ENCODE measurements at regions of chrX and their contacts with region 1.

Region 1: DNA sequence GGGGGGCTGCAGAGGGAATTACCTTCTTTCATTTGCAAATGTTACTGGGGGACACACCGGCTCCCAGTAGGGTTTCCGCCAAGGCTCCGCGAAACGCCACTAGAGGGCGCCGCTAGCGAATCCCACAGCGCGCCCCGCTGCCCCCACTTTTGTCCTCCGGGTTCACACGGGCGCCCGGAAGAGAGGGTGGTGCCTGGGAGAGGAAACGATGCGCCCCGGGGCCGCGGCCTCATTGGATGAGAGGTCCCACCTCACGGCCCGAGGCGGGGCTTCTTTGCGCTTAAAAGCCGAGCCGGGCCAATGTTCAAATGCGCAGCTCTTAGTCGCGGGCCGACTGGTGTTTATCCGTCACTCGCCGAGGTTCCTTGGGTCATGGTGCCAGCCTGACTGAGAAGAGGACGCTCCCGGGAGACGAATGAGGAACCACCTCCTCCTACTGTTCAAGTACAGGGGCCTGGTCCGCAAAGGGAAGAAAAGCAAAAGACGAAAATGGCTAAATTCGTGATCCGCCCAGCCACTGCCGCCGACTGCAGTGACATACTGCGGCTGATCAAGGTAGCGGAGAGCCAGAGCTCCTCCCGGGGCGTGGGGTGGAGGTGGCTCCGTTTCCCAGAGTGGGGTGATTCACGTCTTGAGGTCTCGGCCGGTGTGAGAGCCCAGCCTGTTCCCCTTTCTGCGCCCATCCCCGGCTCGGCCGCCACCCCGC is at the start of gene SAT1:
- DNase-seq: peak; percentile 95
- ATAC-seq: peak; percentile 88
- H3K4me3 ChIP-seq: peak within 1 kb of the TSS; percentile 71 to 92 (median 81)
- H3K4me3 Mint-ChIP-seq: peak within 1 kb of the TSS; percentile 94
- H3K27ac ChIP-seq: peak within 1 kb of the TSS; percentile 87 to 92
- H3K27ac Mint-ChIP-seq: peak within 1 kb of the TSS; percentile 98
- H3K4me1 ChIP-seq: peaks cover 17 to 37% of the 10 kb centered on the region in 2 donors
- H3K4me1 Mint-ChIP-seq: peaks cover 32% of the 10 kb centered on the region
- H3K27me3 ChIP-seq: no peaks in the 10 kb centered on the region
- H3K27me3 Mint-ChIP-seq: no peaks in the 10 kb centered on the region
- CTCF ChIP-seq: peak; percentile 72
- total RNA-seq, gene SAT1: 162 and 172 TPM in 2 replicates

Region 2: DNA sequence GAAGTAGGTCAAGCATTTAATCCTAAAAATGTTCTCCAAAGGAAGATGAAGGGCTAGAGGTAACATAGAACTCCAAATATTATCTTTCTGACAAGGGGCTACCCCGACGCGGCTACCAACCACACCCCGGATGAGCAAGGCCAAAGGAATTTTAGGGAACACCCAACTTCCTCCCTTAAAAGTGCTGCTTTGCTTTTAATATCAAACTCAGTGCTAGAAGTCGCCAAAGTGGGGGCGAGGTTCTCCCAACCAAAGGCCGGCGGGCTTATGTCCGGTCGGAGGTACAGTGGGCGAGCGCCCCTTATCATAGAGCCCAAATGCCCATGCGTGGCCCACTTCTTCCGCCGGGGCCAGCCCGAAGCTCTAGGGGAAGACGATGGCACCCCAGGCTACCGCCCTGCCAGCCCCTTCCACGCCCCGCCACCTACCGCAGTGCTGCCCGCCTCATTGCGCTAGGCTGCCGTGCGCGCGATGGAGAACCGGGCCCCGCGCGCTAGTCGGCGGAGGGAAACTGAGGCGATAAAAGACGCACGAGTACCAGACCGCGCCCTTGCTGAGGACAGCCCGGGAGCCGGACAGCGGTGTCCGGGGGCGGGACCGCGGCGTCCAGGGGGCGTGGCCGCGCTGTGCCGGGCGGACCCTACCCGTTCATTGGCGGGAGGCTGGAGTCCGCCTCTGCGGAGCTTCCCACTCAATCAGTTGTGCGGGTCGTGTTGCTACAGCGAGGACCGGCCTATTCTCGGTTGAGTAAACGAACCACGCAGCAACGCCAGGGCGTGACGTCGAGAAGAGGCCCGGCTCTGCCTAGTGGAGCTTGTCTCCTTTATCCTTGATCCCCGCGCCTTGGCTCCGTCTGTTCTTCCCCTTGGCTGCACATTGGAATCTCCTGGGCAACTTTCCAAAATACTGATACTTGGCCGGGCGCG is 40.1 kb before region 1 on chrX and contains the start of gene ACOT9:
- CTCF ChIA-PET with region 1: interaction called, 8 read pairs
- POLR2A ChIA-PET with region 1: interaction called, 4 read pairs
- intact Hi-C with region 1: loop called (anchors 2 kb)
- DNase-seq: peak; percentile 86
- ATAC-seq: peak; percentile 95
- H3K4me3 ChIP-seq: peak within 1 kb of the TSS; percentile 36 to 80 (median 75)
- H3K4me3 Mint-ChIP-seq: peak within 1 kb of the TSS; percentile 91
- H3K27ac ChIP-seq: peak within 1 kb of the TSS; percentile 86 to 87
- H3K27ac Mint-ChIP-seq: peak within 1 kb of the TSS; percentile 90
- H3K4me1 ChIP-seq: peaks cover 3 to 12% of the 10 kb centered on the region in 2 donors
- H3K4me1 Mint-ChIP-seq: peaks cover 31% of the 10 kb centered on the region
- H3K27me3 ChIP-seq: no peaks in the 10 kb centered on the region
- H3K27me3 Mint-ChIP-seq: no peaks in the 10 kb centered on the region
- CTCF ChIP-seq: no peak
- total RNA-seq, gene ACOT9: 31.3 and 33.6 TPM in 2 replicates

Region 3: GRCh38 chrX:23817172-23817601 is 34.2 kb after region 1 on chrX:
- CTCF ChIA-PET with region 1: no interaction called
- POLR2A ChIA-PET with region 1: interaction called, 9 read pairs
- intact Hi-C with region 1: loop called (anchors 5 kb)
- DNase-seq: peak; percentile 79
- ATAC-seq: peak; percentile 98
- H3K4me3 ChIP-seq: no peak overlapping the region
- H3K4me3 Mint-ChIP-seq: no peak overlapping the region
- H3K27ac ChIP-seq: peak overlapping the region; percentile 65
- H3K27ac Mint-ChIP-seq: peak overlapping the region; percentile 95
- H3K4me1 ChIP-seq: peaks cover 7 to 11% of the 10 kb centered on the region in 2 donors
- H3K4me1 Mint-ChIP-seq: peaks cover 8% of the 10 kb centered on the region
- H3K27me3 ChIP-seq: no peaks in the 10 kb centered on the region
- H3K27me3 Mint-ChIP-seq: no peaks in the 10 kb centered on the region
- CTCF ChIP-seq: no peak

Region 4: GRCh38 chrX:23854945-23855344 is 71.9 kb after region 1 on chrX:
- CTCF ChIA-PET with region 1: no interaction called
- POLR2A ChIA-PET with region 1: no interaction called
- intact Hi-C with region 1: no loop called
- DNase-seq: no peak
- ATAC-seq: no peak
- H3K4me3 ChIP-seq: no peak overlapping the region
- H3K4me3 Mint-ChIP-seq: no peak overlapping the region
- H3K27ac ChIP-seq: no peak overlapping the region
- H3K27ac Mint-ChIP-seq: no peak overlapping the region
- H3K4me1 ChIP-seq: no peaks in the 10 kb centered on the region
- H3K4me1 Mint-ChIP-seq: no peaks in the 10 kb centered on the region
- H3K27me3 ChIP-seq: no peaks in the 10 kb centered on the region
- H3K27me3 Mint-ChIP-seq: no peaks in the 10 kb centered on the region
- CTCF ChIP-seq: no peak

Region 5: DNA sequence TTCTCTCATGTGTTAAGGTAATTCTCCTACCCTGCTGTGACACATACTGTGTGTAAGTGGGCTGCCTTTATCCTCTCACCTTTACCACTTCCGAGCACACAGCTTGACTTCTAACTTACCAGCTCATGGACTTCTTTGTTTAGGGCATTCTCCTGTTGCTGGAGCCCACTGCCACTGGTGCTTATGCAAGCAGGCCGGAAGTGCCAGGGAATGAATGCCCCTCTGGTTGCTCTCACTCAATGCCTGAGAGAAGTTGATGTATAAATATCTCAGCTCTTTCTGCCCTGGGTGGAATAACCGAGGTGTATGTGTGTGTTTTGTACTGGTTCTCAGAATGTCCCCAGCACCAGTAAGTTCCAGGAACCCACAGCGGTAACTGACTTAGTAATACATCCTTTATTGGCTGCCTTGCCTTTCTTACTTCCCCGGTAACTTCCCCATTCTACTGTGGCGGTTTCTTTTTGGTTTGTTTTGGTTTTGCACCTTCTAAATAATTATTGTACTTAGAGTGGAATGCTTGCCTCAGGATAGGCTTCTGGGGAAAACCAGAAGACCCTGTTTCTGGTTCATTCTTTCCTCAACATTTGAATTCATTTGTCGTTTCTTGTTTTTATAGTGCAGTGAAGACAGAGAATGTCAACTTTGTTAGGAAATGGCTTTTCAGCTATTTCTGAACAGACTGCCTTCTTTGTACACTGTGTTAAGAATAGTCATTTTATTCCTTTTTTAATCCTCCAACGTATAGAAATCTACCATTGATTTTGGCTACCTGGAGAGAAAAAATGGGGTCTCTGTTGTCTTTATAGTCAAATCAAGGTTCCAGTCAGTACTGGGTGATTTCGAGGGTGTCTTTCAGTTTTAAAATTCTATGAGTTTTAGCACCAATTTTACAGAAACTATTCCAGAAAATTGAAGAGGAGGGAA is 170.2 kb after region 1 on chrX:
- CTCF ChIA-PET with region 1: no interaction called
- POLR2A ChIA-PET with region 1: no interaction called
- intact Hi-C with region 1: no loop called
- DNase-seq: peak; percentile 63
- ATAC-seq: peak; percentile 87
- H3K4me3 ChIP-seq: peak overlapping the region; percentile 15 to 60 (median 29)
- H3K4me3 Mint-ChIP-seq: peak overlapping the region; percentile 70
- H3K27ac ChIP-seq: peak overlapping the region; percentile 65 to 76
- H3K27ac Mint-ChIP-seq: peak overlapping the region; percentile 89
- H3K4me1 ChIP-seq: peaks cover 6 to 17% of the 10 kb centered on the region in 2 donors
- H3K4me1 Mint-ChIP-seq: peaks cover 10% of the 10 kb centered on the region
- H3K27me3 ChIP-seq: no peaks in the 10 kb centered on the region
- H3K27me3 Mint-ChIP-seq: no peaks in the 10 kb centered on the region
- CTCF ChIP-seq: no peak

Region 6: GRCh38 chrX:24024819-24025740 is 242.1 kb after region 1 on chrX:
- CTCF ChIA-PET with region 1: no interaction called
- POLR2A ChIA-PET with region 1: interaction called, 9 read pairs
- intact Hi-C with region 1: loop called (anchors 2 kb)
- DNase-seq: peak; percentile 88
- ATAC-seq: peak; percentile 89
- H3K4me3 ChIP-seq: peak overlapping the region; percentile 54 to 81 (median 79)
- H3K4me3 Mint-ChIP-seq: peak overlapping the region; percentile 85
- H3K27ac ChIP-seq: peak overlapping the region; percentile 77 to 93
- H3K27ac Mint-ChIP-seq: peak overlapping the region; percentile 82
- H3K4me1 ChIP-seq: peaks cover 4 to 10% of the 10 kb centered on the region in 2 donors
- H3K4me1 Mint-ChIP-seq: peaks cover 36% of the 10 kb centered on the region
- H3K27me3 ChIP-seq: no peaks in the 10 kb centered on the region
- H3K27me3 Mint-ChIP-seq: no peaks in the 10 kb centered on the region
- CTCF ChIP-seq: no peak

Region 7: DNA sequence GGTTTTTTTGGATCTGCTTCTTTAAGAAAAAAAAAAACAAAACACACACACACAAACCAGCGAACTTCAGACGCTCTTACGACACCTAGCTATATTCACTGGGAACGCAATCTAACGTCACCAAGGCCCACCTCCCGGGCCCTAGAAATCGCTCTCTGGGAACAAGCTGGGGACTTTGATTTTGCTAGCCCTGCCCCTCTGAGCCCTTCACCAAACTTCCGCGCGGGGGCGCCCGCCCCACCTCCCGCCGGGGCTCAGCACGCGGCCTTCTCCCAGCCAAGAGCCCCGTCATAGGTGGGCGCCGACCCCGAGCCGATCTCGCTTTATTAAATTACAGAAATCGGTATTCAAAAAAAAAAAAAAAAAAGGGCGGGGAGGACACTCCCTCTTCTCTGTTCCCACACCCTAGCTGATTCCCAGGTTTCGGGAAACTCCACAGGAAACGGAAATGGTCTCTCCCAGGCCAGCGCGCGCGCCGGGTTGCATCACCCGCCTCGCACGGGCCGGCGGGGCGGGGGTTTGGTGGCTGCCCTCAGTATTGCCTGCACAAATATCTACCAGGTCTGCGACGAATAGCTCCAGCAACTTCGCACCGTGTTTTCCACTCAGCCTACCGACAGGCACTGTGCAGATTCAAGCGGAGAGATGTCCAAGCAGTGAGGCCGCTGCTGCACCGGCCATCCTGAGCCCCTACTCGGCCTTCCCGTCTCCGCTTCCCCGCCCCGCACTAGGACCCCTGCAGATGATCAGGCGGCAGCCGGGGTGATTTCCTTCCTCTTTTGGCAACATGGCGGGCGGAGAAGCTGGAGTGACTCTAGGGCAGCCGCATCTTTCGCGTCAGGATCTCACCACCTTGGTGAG is 271.4 kb after region 1 on chrX and contains the start of gene EIF2S3:
- CTCF ChIA-PET with region 1: interaction called, 8 read pairs
- POLR2A ChIA-PET with region 1: interaction called, 12 read pairs
- intact Hi-C with region 1: no loop called
- DNase-seq: peak; percentile 95
- ATAC-seq: peak; percentile 80
- H3K4me3 ChIP-seq: peak within 1 kb of the TSS; percentile 76 to 98 (median 89)
- H3K4me3 Mint-ChIP-seq: peak within 1 kb of the TSS; percentile 99
- H3K27ac ChIP-seq: no peak within 1 kb of the TSS
- H3K27ac Mint-ChIP-seq: peak within 1 kb of the TSS; percentile 100
- H3K4me1 ChIP-seq: no peaks in the 10 kb centered on the region
- H3K4me1 Mint-ChIP-seq: peaks cover 3% of the 10 kb centered on the region
- H3K27me3 ChIP-seq: no peaks in the 10 kb centered on the region
- H3K27me3 Mint-ChIP-seq: no peaks in the 10 kb centered on the region
- CTCF ChIP-seq: peak; percentile 71
- total RNA-seq, gene EIF2S3: 260 and 272 TPM in 2 replicates

Region 8: GRCh38 chrX:24150051-24150790 is 367.2 kb after region 1 on chrX:
- CTCF ChIA-PET with region 1: no interaction called
- POLR2A ChIA-PET with region 1: no interaction called
- intact Hi-C with region 1: loop called (anchors 5 kb)
- DNase-seq: peak; percentile 94
- ATAC-seq: peak; percentile 69
- H3K4me3 ChIP-seq: peak overlapping the region; percentile 61 to 90 (median 72)
- H3K4me3 Mint-ChIP-seq: peak overlapping the region; percentile 87
- H3K27ac ChIP-seq: peak overlapping the region; percentile 90 to 98
- H3K27ac Mint-ChIP-seq: peak overlapping the region; percentile 87
- H3K4me1 ChIP-seq: peaks cover 38 to 56% of the 10 kb centered on the region in 2 donors
- H3K4me1 Mint-ChIP-seq: peaks cover 50% of the 10 kb centered on the region
- H3K27me3 ChIP-seq: no peaks in the 10 kb centered on the region
- H3K27me3 Mint-ChIP-seq: no peaks in the 10 kb centered on the region
- CTCF ChIP-seq: peak; percentile 34

Region 9: DNA sequence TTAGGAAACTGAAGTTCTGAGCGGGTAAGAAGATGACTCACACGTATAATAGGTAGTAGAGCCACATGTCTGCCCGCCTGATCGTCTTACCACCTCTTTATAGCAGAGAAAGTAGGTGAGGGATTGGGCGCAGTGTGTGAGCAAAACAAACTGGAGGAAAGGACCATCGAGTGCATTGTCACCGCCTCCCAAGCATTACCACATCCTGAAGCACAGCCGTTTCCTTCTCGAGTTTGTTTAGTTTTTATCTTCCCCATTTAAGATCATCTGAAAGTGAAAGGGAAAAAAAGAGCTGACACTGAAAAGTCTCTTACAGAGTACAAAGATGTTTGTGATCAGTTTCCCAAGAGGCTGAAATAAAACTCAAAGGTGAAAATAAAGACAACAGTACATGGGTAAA is 696.9 kb after region 1 on chrX:
- CTCF ChIA-PET with region 1: no interaction called
- POLR2A ChIA-PET with region 1: no interaction called
- intact Hi-C with region 1: loop called (anchors 5 kb)
- DNase-seq: peak; percentile 89
- ATAC-seq: peak; percentile 96
- H3K4me3 ChIP-seq: peak overlapping the region; percentile 31 to 62 (median 42)
- H3K4me3 Mint-ChIP-seq: peak overlapping the region; percentile 92
- H3K27ac ChIP-seq: peak overlapping the region; percentile 93 to 96
- H3K27ac Mint-ChIP-seq: peak overlapping the region; percentile 99
- H3K4me1 ChIP-seq: peaks cover 33 to 49% of the 10 kb centered on the region in 2 donors
- H3K4me1 Mint-ChIP-seq: peaks cover 62% of the 10 kb centered on the region
- H3K27me3 ChIP-seq: no peaks in the 10 kb centered on the region
- H3K27me3 Mint-ChIP-seq: no peaks in the 10 kb centered on the region
- CTCF ChIP-seq: no peak